Esophagus muscularis mucosa (tissue), 4 donors: ENCODE measurements at regions of chr17 and their contacts with region 1.

Region 1: DNA sequence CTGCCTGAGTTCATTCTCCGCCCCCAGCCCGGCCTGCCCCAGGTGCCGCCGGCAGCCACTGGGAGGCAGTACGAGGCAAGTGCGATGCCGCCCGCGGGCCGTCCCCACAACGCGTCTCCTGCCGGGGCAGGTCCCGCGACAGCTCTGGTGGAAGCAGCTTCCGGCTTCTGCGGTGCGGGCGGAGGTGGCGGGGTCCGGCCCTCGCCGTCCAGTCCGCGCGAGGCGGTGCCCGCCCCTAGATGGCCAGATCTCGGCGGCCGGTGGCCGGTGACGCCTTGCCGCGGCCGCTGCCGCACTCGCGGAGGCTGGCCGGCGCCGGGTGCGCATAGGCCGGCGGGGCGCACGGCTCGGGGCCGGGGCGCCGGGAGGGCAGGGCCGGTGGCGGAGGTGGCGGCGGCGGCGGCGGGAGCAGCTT is 1.8 kb downstream of the GJD3 start:
- DNase-seq: no peak
- H3K4me3 ChIP-seq: peak overlapping the region; percentile 57 to 68 (median 60)
- H3K27ac ChIP-seq: peak overlapping the region in 1 of 4 donors; percentile 39
- H3K4me1 ChIP-seq: peaks cover 10 to 47% (median 30%) of the 10 kb centered on the region in 4 donors
- H3K27me3 ChIP-seq: peaks cover 0 to 8% (median 0%) of the 10 kb centered on the region in 4 donors
- CTCF ChIP-seq: peak; percentile 43 to 57 (median 45)
- EP300 ChIP-seq: no peak
- POLR2A ChIP-seq: no peak

Region 2: DNA sequence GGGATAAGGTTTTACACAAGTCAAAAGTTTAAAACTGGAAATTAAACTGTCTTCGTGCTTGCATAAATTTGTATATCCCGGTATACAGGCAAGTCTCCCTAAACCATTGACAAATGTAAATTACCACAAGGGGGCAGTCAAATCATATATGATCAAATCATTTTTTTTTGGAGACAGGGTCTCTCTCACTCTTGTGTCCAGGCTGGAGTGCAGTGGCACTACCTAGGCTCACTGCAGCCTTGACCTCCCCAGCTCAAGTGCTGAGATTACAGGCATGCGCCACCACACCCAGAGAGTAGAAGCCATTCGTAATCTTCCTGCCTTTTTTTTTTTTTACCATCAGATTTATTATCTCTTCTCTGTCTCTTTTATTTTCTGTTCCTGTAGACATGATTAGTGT is 36.5 kb after region 1 on chr17:
- intact Hi-C with region 1: loop called (anchors 5 kb)
- DNase-seq: no peak
- H3K4me3 ChIP-seq: no peak overlapping the region
- H3K27ac ChIP-seq: no peak overlapping the region
- H3K4me1 ChIP-seq: peaks cover 0 to 2% (median 0%) of the 10 kb centered on the region in 4 donors
- H3K27me3 ChIP-seq: no peaks in the 10 kb centered on the region
- CTCF ChIP-seq: peak; percentile 58 to 65 (median 62)
- EP300 ChIP-seq: no peak
- POLR2A ChIP-seq: no peak